ENCODE measurements at regions of chr18 and their contacts with region 1.

Region 1: GRCh38 chr18:49716035-49716434 is 97.3 kb downstream of the ACAA2 start:
- DNase-seq: no peak
- H3K4me3 ChIP-seq: no peak overlapping the region
- H3K27ac ChIP-seq: no peak overlapping the region
- H3K4me1 ChIP-seq: peaks cover 0 to 8% (median 6%) of the 10 kb centered on the region in 4 donors
- H3K27me3 ChIP-seq: no peaks in the 10 kb centered on the region
- CTCF ChIP-seq: no peak
- EP300 ChIP-seq: no peak
- POLR2A ChIP-seq: no peak

Region 2: GRCh38 chr18:49656073-49656591 is 59.9 kb before region 1 on chr18:
- in situ Hi-C with region 1: loop called in 1 of 4 experiments (anchors 10 kb)
- intact Hi-C with region 1: no loop called
- DNase-seq: no peak
- H3K4me3 ChIP-seq: no peak overlapping the region
- H3K27ac ChIP-seq: peak overlapping the region in 1 of 4 donors; percentile 32
- H3K4me1 ChIP-seq: peaks cover 0 to 14% (median 0%) of the 10 kb centered on the region in 4 donors
- H3K27me3 ChIP-seq: no peaks in the 10 kb centered on the region
- CTCF ChIP-seq: no peak
- EP300 ChIP-seq: no peak
- POLR2A ChIP-seq: no peak

Measured in transverse colon (tissue), 4 donors.